Activated CD4-positive, alpha-beta T cell treated with anti-CD3 and anti-CD28 coated beads for 36 hours (primary cell): ENCODE measurements at regions of chr10 and their contacts with region 1.

Region 1: DNA sequence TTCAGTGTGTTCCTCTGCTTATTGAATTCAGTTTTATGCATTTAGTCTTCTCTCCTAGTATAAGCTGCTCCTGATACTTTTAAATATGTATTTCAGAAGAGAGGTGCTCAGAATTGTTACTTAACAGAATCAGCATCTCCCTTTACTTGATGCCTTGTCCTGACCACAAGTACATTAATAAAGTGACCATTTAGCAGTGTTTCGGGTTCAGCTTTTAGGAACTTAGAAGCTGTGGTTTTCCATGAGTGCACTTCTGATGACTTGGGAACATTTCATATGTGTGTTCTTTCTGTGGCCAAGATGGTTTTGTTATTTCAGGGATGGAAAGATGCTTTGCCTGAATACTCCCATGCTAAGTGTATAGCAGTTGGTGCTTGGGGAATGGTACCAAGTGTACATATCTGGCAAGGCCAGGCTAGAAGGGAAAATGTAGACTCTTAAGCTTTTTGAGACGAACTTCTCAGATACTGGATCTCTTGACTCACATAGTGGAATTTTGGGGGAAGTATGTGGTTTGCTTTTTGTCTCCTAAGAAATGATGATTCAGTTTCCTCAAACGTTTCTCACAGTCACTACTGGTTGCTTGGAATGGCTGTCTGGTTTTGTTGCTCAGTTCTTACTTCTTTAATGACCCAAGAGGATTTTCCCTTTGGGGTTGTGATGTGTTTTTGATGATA is 17.2 kb downstream of the SGPL1 start:
- DNase-seq: no peak
- ATAC-seq: peak; percentile 74
- H3K4me3 Mint-ChIP-seq: peak overlapping the region; percentile 20
- H3K27ac Mint-ChIP-seq: peak overlapping the region; percentile 88
- H3K4me1 Mint-ChIP-seq: peaks cover 89% of the 10 kb centered on the region
- H3K27me3 Mint-ChIP-seq: no peaks in the 10 kb centered on the region

Region 2: GRCh38 chr10:70803775-70804420 is 29.1 kb before region 1 on chr10:
- CTCF ChIA-PET with region 1: no interaction called
- POLR2A ChIA-PET with region 1: no interaction called
- intact Hi-C with region 1: no loop called
- DNase-seq: no peak
- ATAC-seq: no peak
- H3K4me3 Mint-ChIP-seq: no peak overlapping the region
- H3K27ac Mint-ChIP-seq: no peak overlapping the region
- H3K4me1 Mint-ChIP-seq: no peaks in the 10 kb centered on the region
- H3K27me3 Mint-ChIP-seq: peaks cover 16% of the 10 kb centered on the region

Region 3: DNA sequence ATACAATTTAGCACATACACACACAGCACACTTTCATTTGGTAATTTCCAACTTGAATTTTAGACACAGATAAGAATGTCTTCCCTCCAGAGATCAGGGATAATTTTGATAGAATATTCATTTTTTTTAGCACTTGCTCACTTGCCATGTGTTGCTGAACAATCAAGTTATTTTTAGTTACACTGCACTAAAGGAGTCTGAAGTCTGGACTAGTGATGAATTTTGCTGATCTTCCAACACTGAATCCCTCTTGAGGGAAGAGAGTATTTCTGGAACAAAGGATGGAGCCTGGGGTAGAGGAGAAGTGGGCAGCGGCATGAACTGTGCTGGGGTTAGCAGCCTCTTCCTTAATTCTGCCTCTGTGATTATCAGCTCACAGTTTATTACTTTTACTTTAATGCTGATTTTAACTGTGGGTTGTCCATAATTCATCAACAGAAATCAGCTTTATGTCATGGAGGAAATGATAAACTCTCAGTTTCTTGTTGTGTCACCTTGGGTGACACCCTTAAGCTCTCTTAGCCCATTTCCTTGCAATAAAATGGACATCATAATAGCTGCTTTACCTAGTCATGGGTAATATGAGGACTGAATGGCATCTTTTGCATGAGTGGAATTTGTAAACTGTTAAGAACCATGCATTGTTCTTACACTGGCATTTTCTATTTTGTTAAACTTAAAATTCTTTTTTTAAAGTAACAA is 14.8 kb after region 1 on chr10:
- CTCF ChIA-PET with region 1: interaction called, 8 read pairs
- POLR2A ChIA-PET with region 1: interaction called, 4 read pairs
- intact Hi-C with region 1: loop called in 1 of 2 experiments (anchors 1 kb)
- DNase-seq: no peak
- ATAC-seq: peak; percentile 86
- H3K4me3 Mint-ChIP-seq: peak overlapping the region; percentile 23
- H3K27ac Mint-ChIP-seq: peak overlapping the region; percentile 82
- H3K4me1 Mint-ChIP-seq: peaks cover 52% of the 10 kb centered on the region
- H3K27me3 Mint-ChIP-seq: no peaks in the 10 kb centered on the region

Region 4: DNA sequence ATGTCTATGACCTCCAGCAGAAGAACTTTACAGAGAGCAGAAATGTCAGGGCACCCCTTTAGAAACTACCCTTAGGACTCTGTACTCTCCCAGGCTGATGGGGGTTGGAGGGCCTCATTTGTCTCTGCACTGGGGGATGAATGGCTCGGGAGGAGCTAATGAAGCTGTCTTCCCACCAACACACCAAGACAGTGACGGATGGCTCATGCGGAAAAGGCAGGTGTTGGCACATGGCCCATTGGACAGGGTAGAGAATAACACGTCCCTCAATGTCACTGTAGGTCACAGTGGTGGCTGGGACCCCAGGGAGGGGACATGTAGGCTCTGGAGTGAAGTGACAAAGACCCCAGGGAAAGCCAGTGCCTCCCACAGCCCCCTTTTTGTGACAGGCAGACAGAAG is 119.4 kb after region 1 on chr10:
- CTCF ChIA-PET with region 1: no interaction called
- POLR2A ChIA-PET with region 1: no interaction called
- intact Hi-C with region 1: no loop called
- DNase-seq: no peak
- ATAC-seq: no peak
- H3K4me3 Mint-ChIP-seq: no peak overlapping the region
- H3K27ac Mint-ChIP-seq: no peak overlapping the region
- H3K4me1 Mint-ChIP-seq: no peaks in the 10 kb centered on the region
- H3K27me3 Mint-ChIP-seq: peaks cover 2% of the 10 kb centered on the region

Region 5: DNA sequence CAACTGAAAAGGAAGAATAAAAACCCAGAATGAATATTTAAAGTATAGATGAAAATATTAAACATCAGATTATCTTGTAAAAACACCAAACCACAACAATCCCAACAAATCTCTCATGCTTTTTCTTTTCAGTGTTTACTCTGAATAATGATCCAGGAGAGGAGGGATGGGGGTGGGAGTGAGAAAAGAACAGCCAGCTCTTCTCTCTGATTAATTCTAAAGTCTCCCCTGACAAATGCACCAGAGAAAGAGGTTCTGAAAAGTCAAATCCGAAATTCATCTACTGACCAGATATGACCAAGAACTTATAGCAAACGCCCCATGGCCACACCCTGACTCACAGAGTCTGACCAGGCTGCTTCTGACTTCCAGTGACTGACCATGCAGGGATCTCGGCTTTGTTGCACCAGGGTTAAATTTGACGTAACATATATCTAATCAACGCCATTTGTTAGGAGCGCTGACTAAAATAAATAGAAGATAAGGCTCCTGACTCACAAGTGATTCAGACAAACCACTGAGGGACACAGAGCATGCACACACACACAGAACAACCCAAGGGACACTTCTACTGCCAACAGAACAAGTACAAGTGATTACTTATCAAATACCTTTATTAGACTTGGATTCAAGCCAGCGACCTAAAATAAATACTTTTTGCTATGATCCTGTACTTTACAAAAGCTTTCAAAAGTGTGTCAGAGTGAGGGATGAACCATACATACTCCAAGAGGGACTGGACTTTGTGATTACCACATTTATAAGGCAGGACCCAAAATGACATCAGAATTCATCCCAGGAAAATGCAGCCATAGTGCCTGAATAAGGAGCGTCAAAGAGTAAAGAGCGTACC is 1264.7 kb after region 1 on chr10:
- CTCF ChIA-PET with region 1: no interaction called
- POLR2A ChIA-PET with region 1: no interaction called
- intact Hi-C with region 1: loop called in 1 of 2 experiments (anchors 10 kb)
- DNase-seq: no peak
- ATAC-seq: peak; percentile 60
- H3K4me3 Mint-ChIP-seq: no peak overlapping the region
- H3K27ac Mint-ChIP-seq: peak overlapping the region; percentile 53
- H3K4me1 Mint-ChIP-seq: peaks cover 72% of the 10 kb centered on the region
- H3K27me3 Mint-ChIP-seq: no peaks in the 10 kb centered on the region